Gastrocnemius medialis (tissue), 4 donors: ENCODE measurements at regions of chr11 and their contacts with region 1.

Region 1: GRCh38 chr11:73965076-73965860 is 14.4 kb downstream of the DNAJB13 start:
- DNase-seq: no peak
- ATAC-seq: no peak
- H3K4me3 ChIP-seq: no peak overlapping the region
- H3K27ac ChIP-seq: no peak overlapping the region
- H3K4me1 ChIP-seq: peaks cover 7 to 17% of the 10 kb centered on the region in 2 donors
- H3K27me3 ChIP-seq: no peaks in the 10 kb centered on the region
- CTCF ChIP-seq: no peak
- POLR2A ChIP-seq: no peak

Region 2: GRCh38 chr11:73478738-73479347 is 486.4 kb before region 1 on chr11:
- in situ Hi-C with region 1: no loop called
- intact Hi-C with region 1: no loop called
- DNase-seq: no peak
- ATAC-seq: peak; percentile 76 to 95
- H3K4me3 ChIP-seq: no peak overlapping the region
- H3K27ac ChIP-seq: peak overlapping the region in 3 of 4 donors; percentile 11 to 40 (median 20)
- H3K4me1 ChIP-seq: peaks cover 6 to 16% of the 10 kb centered on the region in 2 donors
- H3K27me3 ChIP-seq: no peaks in the 10 kb centered on the region
- CTCF ChIP-seq: peak; percentile 48 to 77 (median 64)
- POLR2A ChIP-seq: no peak

Region 3: GRCh38 chr11:74024261-74025029 is 59.2 kb after region 1 on chr11:
- in situ Hi-C with region 1: no loop called
- intact Hi-C with region 1: loop called (anchors 2 kb)
- DNase-seq: peak in 1 of 2 donors; percentile 73
- ATAC-seq: peak in 1 of 2 donors; percentile 40
- H3K4me3 ChIP-seq: no peak overlapping the region
- H3K27ac ChIP-seq: peak overlapping the region in 2 of 4 donors; percentile 17 to 26
- H3K4me1 ChIP-seq: peaks cover 12 to 26% of the 10 kb centered on the region in 2 donors
- H3K27me3 ChIP-seq: no peaks in the 10 kb centered on the region
- CTCF ChIP-seq: no peak
- POLR2A ChIP-seq: no peak

Region 4: DNA sequence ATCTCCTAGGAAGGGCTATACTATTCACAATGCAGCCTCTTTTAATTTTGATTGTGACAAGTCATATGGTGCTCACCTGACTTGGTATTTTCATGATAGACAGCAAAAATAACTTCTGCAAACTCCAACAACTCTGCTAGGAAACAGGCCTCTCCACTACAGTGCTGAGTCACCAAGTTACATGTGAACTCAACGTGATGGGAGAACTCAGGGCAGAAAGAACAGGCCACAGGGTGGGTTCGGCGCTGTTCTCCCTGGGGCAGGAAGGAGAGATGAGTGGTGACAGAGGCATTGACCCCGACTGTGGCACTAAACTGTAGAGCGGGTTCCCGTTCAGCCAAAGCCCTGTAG is 120.2 kb after region 1 on chr11:
- in situ Hi-C with region 1: loop called (anchors 5 to 10 kb)
- intact Hi-C with region 1: loop called (anchors 1 kb)
- DNase-seq: no peak
- ATAC-seq: no peak
- H3K4me3 ChIP-seq: no peak overlapping the region
- H3K27ac ChIP-seq: no peak overlapping the region
- H3K4me1 ChIP-seq: no peaks in the 10 kb centered on the region
- H3K27me3 ChIP-seq: no peaks in the 10 kb centered on the region
- CTCF ChIP-seq: no peak
- POLR2A ChIP-seq: no peak

Region 5: GRCh38 chr11:74090701-74091100 is 125.4 kb after region 1 on chr11:
- in situ Hi-C with region 1: loop called (anchors 5 to 10 kb)
- intact Hi-C with region 1: loop called (anchors 1 kb)
- DNase-seq: peak; percentile 13 to 37
- ATAC-seq: peak; percentile 92 to 94
- H3K4me3 ChIP-seq: no peak overlapping the region
- H3K27ac ChIP-seq: no peak overlapping the region
- H3K4me1 ChIP-seq: no peaks in the 10 kb centered on the region
- H3K27me3 ChIP-seq: no peaks in the 10 kb centered on the region
- CTCF ChIP-seq: peak; percentile 41 to 60 (median 48)
- POLR2A ChIP-seq: no peak

Region 6: DNA sequence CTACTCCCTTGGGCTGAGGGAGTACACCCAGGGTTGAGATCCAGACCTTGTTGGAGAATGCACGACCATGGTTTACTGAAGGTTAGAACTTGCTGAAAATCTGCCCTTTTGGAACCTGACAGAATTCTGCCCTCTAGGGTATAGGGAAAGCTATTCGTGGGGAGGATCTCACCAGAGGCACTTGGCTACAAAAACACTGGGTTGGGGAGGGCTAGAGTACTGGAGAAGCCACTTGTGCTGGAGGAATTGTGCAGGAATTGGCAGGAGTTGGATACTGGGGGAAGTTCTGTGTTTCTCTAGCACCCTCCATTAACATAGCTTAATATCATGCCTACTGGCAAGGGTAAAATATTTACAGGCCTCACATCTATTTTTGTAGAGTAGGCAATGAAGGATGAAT is 261.6 kb after region 1 on chr11:
- in situ Hi-C with region 1: no loop called
- intact Hi-C with region 1: loop called (anchors 10 kb)
- DNase-seq: no peak
- ATAC-seq: no peak
- H3K4me3 ChIP-seq: no peak overlapping the region
- H3K27ac ChIP-seq: peak overlapping the region in 1 of 4 donors; percentile 37
- H3K4me1 ChIP-seq: peaks cover 19 to 23% of the 10 kb centered on the region in 2 donors
- H3K27me3 ChIP-seq: no peaks in the 10 kb centered on the region
- CTCF ChIP-seq: no peak
- POLR2A ChIP-seq: no peak

Region 7: DNA sequence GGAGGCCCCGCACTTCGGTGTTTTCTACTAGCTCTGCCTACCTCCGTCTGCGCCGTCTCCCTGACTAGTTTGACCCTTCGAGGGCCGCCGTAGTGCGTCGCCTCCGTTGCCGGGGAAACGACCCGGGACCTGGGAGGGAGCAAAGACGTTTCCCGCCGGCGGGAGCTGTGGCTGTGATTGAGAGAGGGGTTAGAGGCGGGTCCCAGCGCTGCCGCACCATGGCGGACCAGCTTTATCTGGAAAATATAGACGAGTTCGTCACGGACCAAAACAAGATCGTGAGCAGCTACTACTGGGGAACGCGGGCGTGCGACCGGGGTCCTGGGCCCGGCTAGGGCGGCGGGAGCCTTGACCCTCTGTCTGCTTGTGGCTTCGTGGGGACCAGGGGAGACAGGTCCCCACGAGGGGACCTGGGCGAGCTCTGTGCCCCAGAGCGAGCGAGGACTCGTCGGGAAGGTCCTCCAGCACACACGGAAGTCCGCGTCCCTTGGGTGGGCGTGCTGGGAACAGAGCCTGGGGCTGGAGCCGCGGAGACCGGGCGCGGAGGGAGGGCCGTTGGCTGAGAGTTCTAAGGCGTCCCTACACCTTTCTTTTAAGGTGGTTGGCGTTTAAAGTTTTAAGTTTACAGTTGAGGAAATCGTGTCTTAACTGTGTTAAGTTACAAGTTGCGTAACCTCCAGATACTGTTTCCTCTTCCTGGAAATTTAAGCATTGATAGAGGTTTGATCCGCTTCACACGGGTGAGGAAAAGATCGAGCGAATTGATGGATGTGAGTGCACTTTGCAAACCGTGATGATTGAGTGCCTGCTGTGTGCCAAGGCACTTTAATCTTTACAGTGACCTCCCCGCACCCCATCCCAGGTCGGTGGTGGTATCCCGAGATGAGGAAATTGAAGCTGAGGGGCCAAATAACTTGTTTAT is 627.4 kb after region 1 on chr11 and contains the start of gene POLD3:
- in situ Hi-C with region 1: no loop called
- intact Hi-C with region 1: loop called (anchors 10 kb)
- DNase-seq: peak; percentile 85 to 87
- ATAC-seq: peak; percentile 96 to 99
- H3K4me3 ChIP-seq: peak within 1 kb of the TSS; percentile 76 to 99 (median 88)
- H3K27ac ChIP-seq: peak within 1 kb of the TSS; percentile 47 to 77 (median 74)
- H3K4me1 ChIP-seq: peaks cover 10 to 12% of the 10 kb centered on the region in 2 donors
- H3K27me3 ChIP-seq: no peaks in the 10 kb centered on the region
- CTCF ChIP-seq: no peak
- POLR2A ChIP-seq: no peak
- total RNA-seq, gene POLD3: 4.6 to 6.4 (median 5.8) TPM